AG04450 (cell line): ENCODE measurements at regions of chr18 and their contacts with region 1.

Region 1: DNA sequence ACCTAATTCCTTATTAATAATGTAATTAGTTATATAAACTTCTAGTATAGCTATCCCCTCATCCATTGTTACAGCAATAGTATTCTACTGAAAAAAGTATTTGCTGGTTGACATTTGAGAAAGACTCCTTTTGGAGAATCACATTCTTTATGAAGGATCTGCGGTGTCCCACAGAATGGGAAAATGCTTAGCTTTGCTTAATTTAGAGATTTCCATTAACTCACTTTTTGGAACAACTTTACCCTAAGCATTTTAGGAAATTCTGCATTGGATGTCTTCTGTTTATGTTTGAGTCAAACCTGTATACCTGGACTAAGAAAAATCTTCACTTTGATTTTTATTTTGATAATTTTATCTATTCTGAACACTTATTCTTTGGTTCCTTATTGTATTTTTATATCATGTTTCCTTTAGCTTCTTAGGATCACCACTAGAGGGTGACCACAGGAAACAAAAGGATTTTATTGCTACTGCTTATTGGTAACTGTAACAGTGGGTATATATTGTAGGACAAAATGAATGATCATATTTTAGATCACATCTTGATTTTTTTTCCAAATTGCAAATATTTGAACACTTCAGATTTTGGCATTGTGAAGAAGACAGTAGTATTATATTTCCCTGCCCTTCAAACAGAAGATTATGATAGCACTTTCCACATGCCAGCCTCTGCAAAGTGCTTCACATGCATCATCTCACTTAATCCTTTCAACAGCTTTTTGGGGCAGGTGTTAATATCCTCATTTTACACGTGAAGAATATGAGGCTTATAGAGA is 79.6 kb downstream of the MIB1 start:
- DNase-seq: no peak
- H3K4me3 ChIP-seq: no peak overlapping the region
- H3K27ac ChIP-seq: no peak overlapping the region
- H3K27me3 ChIP-seq: no peaks in the 10 kb centered on the region
- CTCF ChIP-seq: peak; percentile 78

Region 2: DNA sequence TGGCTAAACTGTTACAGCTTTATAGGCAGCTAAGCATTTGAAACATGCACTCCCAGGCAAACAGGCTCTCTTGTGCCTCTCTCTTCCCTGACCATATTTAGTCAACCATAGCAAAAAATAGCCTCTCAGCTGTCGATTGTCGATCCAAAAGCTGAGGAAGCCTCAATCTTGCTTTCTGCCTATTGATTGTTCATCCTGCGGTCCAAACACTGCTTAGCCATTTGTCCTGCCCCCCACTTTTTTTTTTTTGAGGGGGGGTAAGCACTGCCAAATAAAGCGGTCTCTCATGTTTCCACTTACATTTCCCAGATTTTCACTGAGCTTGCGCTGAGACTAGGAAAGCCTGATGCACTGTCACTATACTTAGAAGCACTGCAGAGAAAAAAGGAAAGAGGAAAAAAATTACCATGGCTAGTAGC is 11.2 kb after region 1 on chr18:
- CTCF ChIA-PET with region 1: interaction called, 38 read pairs
- POLR2A ChIA-PET with region 1: no interaction called
- DNase-seq: peak; percentile 27
- H3K4me3 ChIP-seq: no peak overlapping the region
- H3K27ac ChIP-seq: no peak overlapping the region
- H3K27me3 ChIP-seq: no peaks in the 10 kb centered on the region
- CTCF ChIP-seq: no peak

Region 3: DNA sequence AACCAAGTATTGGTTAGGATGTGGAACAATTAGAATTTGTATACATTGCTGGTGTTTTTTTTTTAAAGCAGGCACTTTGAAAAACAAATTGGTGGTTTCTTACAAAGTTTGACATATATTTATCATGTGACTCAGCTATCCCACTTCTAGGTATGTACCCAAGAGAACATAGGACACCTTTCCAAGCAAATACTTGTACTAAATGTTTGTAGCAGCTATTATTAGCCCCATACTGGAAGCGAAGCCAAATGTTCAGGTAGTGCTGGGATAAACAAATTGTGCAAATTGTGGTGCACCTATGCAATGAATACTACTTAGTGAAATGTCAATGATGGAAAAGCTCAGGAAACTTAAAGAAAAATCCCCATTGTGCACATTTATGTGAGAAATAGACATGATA is 21.3 kb after region 1 on chr18:
- CTCF ChIA-PET with region 1: interaction called, 12 read pairs
- POLR2A ChIA-PET with region 1: no interaction called
- DNase-seq: no peak
- H3K4me3 ChIP-seq: no peak overlapping the region
- H3K27ac ChIP-seq: no peak overlapping the region
- H3K27me3 ChIP-seq: no peaks in the 10 kb centered on the region
- CTCF ChIP-seq: no peak

Region 4: GRCh38 chr18:21868770-21869169 is 48.5 kb after region 1 on chr18:
- CTCF ChIA-PET with region 1: no interaction called
- POLR2A ChIA-PET with region 1: no interaction called
- DNase-seq: no peak
- H3K4me3 ChIP-seq: no peak overlapping the region
- H3K27ac ChIP-seq: no peak overlapping the region
- H3K27me3 ChIP-seq: no peaks in the 10 kb centered on the region
- CTCF ChIP-seq: no peak

Region 5: GRCh38 chr18:22113144-22113830 is 293.1 kb after region 1 on chr18:
- CTCF ChIA-PET with region 1: no interaction called
- POLR2A ChIA-PET with region 1: no interaction called
- DNase-seq: no peak
- H3K4me3 ChIP-seq: no peak overlapping the region
- H3K27ac ChIP-seq: no peak overlapping the region
- H3K27me3 ChIP-seq: peaks cover 17% of the 10 kb centered on the region
- CTCF ChIP-seq: no peak